ENCODE measurements at regions of chr13 and their contacts with region 1.

Region 1: DNA sequence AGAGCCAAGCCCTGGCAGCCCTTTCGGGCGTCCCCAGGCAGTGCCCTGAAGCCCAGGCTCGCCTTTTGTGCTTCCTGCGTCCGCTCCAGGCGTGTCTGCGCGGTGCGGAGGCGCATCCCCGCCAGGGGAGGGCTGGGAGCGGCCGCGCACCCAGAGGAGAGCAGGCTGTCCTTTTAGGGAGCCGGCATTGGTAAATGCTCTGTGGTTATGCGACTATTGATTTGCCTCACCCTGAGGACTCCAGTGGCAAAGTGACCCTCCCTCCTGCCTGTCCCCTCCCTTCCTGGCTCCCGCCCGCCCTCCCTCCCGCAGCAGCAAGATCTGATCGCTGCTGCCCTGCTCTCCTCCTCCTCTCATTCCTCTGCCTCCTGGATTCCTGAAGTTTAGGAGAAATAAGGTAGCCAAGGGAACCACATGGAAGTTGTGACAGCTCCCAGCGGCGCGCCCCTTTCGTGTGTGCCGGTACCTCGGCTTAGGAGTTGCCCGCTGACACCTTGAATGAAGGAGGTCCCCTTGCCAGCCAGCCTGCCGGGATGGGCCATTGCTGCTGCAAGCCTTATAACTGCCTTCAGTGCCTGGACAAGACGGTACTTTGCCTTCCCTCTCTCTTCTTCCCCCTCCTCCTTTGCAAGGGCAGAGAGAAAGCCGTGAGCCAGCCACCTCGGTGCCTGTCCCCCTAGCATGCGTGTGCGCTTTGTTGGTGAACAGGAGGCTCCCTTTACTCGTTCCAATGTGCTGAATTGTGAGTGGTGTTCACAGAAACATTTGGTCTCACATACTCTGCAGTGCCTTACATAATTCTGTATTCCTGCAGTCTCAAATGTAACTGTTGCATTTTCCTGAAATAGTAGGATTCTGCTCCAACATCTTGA is 166.9 kb downstream of the SLC7A1 start:
- DNase-seq: peak; percentile 37 to 53
- ATAC-seq: peak; percentile 83 to 96 (median 94)
- H3K4me3 ChIP-seq: peak overlapping the region; percentile 12 to 60 (median 52)
- H3K27ac ChIP-seq: peak overlapping the region; percentile 23 to 89 (median 82)
- H3K4me1 ChIP-seq: peaks cover 0 to 19% (median 7%) of the 10 kb centered on the region in 9 donors
- H3K27me3 ChIP-seq: peaks cover 0 to 73% (median 19%) of the 10 kb centered on the region in 7 donors
- CTCF ChIP-seq: peak in 5 of 9 donors; percentile 6 to 29 (median 21)

Region 2: DNA sequence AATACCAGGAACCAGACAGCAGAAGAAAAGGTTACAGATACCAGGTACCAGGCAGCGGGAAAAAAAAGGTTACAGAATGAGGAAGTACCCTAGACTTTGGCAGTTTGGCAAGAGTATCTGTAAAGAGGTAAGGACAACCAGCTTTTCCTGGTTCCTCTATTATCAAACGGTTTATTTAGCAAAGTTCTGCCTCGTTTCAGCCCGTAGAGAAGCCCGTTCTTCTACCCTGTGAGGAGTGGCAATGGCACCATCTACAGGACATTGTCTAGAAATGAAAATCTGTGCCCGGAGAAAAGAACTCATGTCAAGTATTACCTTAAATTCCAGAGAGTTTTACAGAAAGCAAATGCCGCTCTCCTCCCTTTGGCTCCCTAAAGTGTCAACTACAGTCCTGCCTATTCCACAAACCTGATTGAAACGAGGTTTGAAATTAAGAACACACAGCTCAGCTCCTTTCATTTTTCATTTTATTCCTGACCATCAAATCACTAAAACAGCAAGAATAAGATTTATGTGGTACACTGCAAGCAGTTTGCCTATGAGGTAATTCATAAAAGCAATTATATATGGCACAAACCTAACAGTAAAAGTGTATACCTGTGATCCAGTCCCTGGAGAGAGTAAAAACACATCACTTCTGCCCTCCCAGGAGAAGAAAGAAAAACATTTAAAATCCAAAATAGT is 59.3 kb before region 1 on chr13:
- intact Hi-C with region 1: no loop called
- DNase-seq: no peak
- ATAC-seq: peak in 4 of 8 donors; percentile 28 to 57 (median 38)
- H3K4me3 ChIP-seq: no peak overlapping the region
- H3K27ac ChIP-seq: no peak overlapping the region
- H3K4me1 ChIP-seq: no peaks in the 10 kb centered on the region
- H3K27me3 ChIP-seq: peaks cover 0 to 4% (median 0%) of the 10 kb centered on the region in 7 donors
- CTCF ChIP-seq: peak in 8 of 9 donors; percentile 25 to 62 (median 49)

Region 3: GRCh38 chr13:29465741-29466293 is 37.3 kb after region 1 on chr13:
- intact Hi-C with region 1: loop called in 3 of 10 experiments (anchors 5 kb)
- DNase-seq: peak; percentile 32 to 38
- ATAC-seq: peak; percentile 31 to 78 (median 70)
- H3K4me3 ChIP-seq: no peak overlapping the region
- H3K27ac ChIP-seq: peak overlapping the region in 9 of 10 donors; percentile 24 to 81 (median 73)
- H3K4me1 ChIP-seq: peaks cover 0 to 37% (median 16%) of the 10 kb centered on the region in 9 donors
- H3K27me3 ChIP-seq: no peaks in the 10 kb centered on the region
- CTCF ChIP-seq: no peak